ENCODE measurements at regions of chr5 and their contacts with region 1.

Region 1: DNA sequence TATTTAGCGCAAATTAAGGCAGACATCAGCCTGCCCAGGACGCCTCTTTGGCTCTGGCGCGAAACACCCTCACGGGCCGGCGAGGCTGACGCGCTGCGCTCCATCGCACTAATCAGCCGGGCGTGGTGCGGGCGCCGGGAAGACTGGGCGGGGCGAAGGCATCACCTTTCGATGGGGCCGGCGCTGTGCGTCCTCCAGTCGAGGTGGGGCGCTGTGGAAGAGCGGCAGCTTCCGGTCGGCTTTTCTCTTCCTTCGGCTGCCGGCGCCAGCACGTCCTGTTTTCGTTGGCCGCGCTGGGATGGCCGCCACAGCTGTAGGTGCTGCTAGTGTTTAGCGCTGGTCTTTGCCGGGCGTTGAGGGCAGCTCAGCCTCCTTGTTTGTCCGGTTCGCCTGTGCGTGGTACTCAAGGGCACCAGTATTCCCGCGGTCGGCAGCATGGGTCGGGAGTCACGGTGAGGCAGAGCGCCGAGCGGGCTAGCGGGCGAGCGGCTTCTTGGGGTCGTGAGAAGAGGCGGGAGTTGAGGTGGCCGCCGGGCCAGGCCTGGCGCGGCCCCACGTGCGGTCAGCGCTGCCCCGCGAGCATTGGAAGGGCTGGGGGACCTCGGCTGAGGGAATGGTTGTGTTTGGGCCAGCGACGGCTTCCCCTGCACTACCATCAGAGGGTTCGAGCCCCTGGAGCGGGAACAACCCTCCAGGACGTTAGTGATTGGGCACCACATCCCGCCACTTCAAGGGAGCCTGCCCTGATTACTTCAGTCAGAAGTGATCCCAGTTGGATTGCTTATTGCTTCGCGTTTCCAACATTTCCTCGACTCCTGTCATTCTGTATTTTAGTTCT is at the start of gene DDX46:
- DNase-seq: peak; percentile 97
- ATAC-seq: peak; percentile 100
- H3K4me3 Mint-ChIP-seq: peak within 1 kb of the TSS; percentile 99
- H3K27ac Mint-ChIP-seq: peak within 1 kb of the TSS; percentile 94
- H3K4me1 Mint-ChIP-seq: peaks cover 30% of the 10 kb centered on the region
- H3K27me3 Mint-ChIP-seq: no peaks in the 10 kb centered on the region
- CTCF ChIP-seq: peak; percentile 69
- total RNA-seq, gene DDX46: 60.8 to 67.9 TPM

Region 2: GRCh38 chr5:134738133-134738962 is 20.4 kb before region 1 on chr5 and contains the start of gene CAMLG:
- CTCF ChIA-PET with region 1: interaction called, 77 read pairs
- POLR2A ChIA-PET with region 1: interaction called, 65 read pairs
- intact Hi-C with region 1: no loop called
- DNase-seq: peak; percentile 98
- ATAC-seq: peak; percentile 97
- H3K4me3 Mint-ChIP-seq: peak within 1 kb of the TSS; percentile 91
- H3K27ac Mint-ChIP-seq: peak within 1 kb of the TSS; percentile 86
- H3K4me1 Mint-ChIP-seq: peaks cover 18% of the 10 kb centered on the region
- H3K27me3 Mint-ChIP-seq: no peaks in the 10 kb centered on the region
- CTCF ChIP-seq: peak; percentile 59
- total RNA-seq, gene CAMLG: 33.8 to 35.9 TPM

Region 3: DNA sequence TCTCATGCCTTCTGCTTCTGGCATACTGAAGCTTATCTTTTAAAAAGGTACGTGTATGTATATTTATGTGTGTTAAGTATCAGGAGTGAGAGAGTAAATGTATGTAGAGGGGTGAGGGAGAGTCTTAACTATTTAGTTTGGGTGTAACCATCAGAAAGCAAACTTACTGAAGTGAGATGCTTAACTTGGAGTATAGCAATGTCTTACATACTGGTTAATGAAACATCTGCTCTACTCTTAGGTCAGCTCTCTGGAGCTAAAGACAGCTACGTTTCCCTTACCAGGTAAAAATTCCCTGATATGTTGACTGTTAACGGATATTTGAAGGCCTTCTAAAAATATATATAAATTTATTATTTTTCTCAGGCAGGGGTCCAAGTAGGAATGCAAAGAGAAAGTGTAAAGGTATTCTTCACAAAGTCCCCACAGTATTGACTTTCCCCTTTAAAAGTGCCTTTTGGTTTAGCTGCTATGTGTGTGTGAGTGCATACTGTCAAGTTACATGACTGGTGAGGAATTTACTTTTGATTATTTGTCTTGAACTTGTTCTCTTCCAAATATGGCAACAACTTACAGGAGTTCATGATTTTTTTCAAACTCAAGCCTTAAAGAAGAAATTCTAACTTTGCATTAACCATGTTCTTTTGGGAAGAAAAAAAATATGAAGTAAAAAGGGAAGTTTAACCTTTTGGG is 74.8 kb after region 1 on chr5:
- CTCF ChIA-PET with region 1: no interaction called
- POLR2A ChIA-PET with region 1: no interaction called
- intact Hi-C with region 1: no loop called
- DNase-seq: no peak
- ATAC-seq: no peak
- H3K4me3 Mint-ChIP-seq: no peak overlapping the region
- H3K27ac Mint-ChIP-seq: no peak overlapping the region
- H3K4me1 Mint-ChIP-seq: no peaks in the 10 kb centered on the region
- H3K27me3 Mint-ChIP-seq: no peaks in the 10 kb centered on the region
- CTCF ChIP-seq: no peak